Calu3 (cell line): ENCODE measurements at regions of chr12 and their contacts with region 1.

Region 1: GRCh38 chr12:82182601-82183190 is 175.5 kb downstream of the CCDC59 start:
- DNase-seq: peak; percentile 61
- H3K4me3 Mint-ChIP-seq: no peak overlapping the region
- H3K27ac Mint-ChIP-seq: peak overlapping the region; percentile 81
- H3K4me1 Mint-ChIP-seq: peaks cover 25% of the 10 kb centered on the region
- H3K27me3 Mint-ChIP-seq: no peaks in the 10 kb centered on the region
- CTCF ChIP-seq: no peak

Region 2: GRCh38 chr12:81942594-81942993 is 240.1 kb before region 1 on chr12:
- CTCF ChIA-PET with region 1: no interaction called
- intact Hi-C with region 1: loop called (anchors 5 kb)
- DNase-seq: peak; percentile 14
- H3K4me3 Mint-ChIP-seq: no peak overlapping the region
- H3K27ac Mint-ChIP-seq: peak overlapping the region; percentile 65
- H3K4me1 Mint-ChIP-seq: peaks cover 19% of the 10 kb centered on the region
- H3K27me3 Mint-ChIP-seq: no peaks in the 10 kb centered on the region
- CTCF ChIP-seq: no peak

Region 3: DNA sequence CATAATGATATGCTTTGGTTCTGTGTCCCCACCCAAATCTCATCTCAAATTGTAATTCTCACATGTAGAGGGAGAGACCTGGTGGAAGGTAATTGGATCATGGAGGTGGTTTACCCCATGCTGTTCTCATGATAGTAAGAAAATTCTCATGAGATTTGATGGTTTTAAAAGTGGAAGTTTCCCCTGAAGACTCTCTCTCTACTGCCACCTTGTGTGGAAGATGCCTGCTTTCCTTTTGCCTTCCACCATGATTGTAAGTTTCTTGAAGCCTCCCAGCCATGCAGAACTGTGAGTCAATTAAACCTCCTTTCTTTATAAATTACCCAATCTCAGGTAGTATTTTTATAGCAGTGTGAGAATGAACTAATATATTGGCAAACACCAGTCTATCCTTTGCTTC is 163.2 kb before region 1 on chr12:
- CTCF ChIA-PET with region 1: no interaction called
- intact Hi-C with region 1: loop called (anchors 5 kb)
- DNase-seq: no peak
- H3K4me3 Mint-ChIP-seq: no peak overlapping the region
- H3K27ac Mint-ChIP-seq: no peak overlapping the region
- H3K4me1 Mint-ChIP-seq: peaks cover 11% of the 10 kb centered on the region
- H3K27me3 Mint-ChIP-seq: no peaks in the 10 kb centered on the region
- CTCF ChIP-seq: no peak

Region 4: GRCh38 chr12:82319276-82319675 is 136.6 kb after region 1 on chr12:
- CTCF ChIA-PET with region 1: no interaction called
- intact Hi-C with region 1: loop called (anchors 5 kb)
- DNase-seq: no peak
- H3K4me3 Mint-ChIP-seq: no peak overlapping the region
- H3K27ac Mint-ChIP-seq: no peak overlapping the region
- H3K4me1 Mint-ChIP-seq: peaks cover 8% of the 10 kb centered on the region
- H3K27me3 Mint-ChIP-seq: no peaks in the 10 kb centered on the region
- CTCF ChIP-seq: no peak

Region 5: GRCh38 chr12:82574191-82574590 is 391.5 kb after region 1 on chr12:
- CTCF ChIA-PET with region 1: no interaction called
- intact Hi-C with region 1: no loop called
- DNase-seq: peak; percentile 21
- H3K4me3 Mint-ChIP-seq: no peak overlapping the region
- H3K27ac Mint-ChIP-seq: no peak overlapping the region
- H3K4me1 Mint-ChIP-seq: no peaks in the 10 kb centered on the region
- H3K27me3 Mint-ChIP-seq: no peaks in the 10 kb centered on the region
- CTCF ChIP-seq: no peak